ENCODE measurements at regions of chr12 and their contacts with region 1.

Region 1: GRCh38 chr12:32365473-32366064 is 33.8 kb upstream of the FGD4 start:
- DNase-seq: peak; percentile 64
- ATAC-seq: peak; percentile 70
- H3K4me3 ChIP-seq: no peak overlapping the region
- H3K27ac ChIP-seq: no peak overlapping the region
- H3K4me1 ChIP-seq: peaks cover 15% of the 10 kb centered on the region
- H3K27me3 ChIP-seq: no peaks in the 10 kb centered on the region
- CTCF ChIP-seq: peak; percentile 86
- EP300 ChIP-seq: no peak
- POLR2A ChIP-seq: no peak
- RAD21 ChIP-seq: peak; percentile 83

Region 2: DNA sequence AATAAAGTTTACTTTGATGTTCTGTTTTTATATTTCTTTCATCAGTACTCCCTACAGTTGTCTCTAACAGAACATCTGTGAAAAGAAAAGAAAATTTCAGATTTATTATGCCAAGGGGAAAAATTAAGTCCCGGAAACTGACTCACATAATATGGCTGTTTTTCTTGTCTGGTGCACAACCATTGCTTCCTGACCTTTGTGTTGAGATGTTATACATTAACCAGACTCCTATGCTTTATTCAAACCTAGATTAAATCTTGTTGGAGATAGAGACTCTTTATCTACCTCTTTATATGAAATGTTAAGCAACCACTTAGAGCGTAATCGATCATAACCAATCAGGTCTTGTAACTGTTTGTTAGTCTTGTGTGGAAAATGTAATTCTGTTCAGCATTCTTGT is 296.5 kb before region 1 on chr12:
- CTCF ChIA-PET with region 1: no interaction called
- POLR2A ChIA-PET with region 1: no interaction called
- in situ Hi-C with region 1: no loop called
- intact Hi-C with region 1: no loop called
- DNase-seq: peak; percentile 46
- ATAC-seq: peak; percentile 77
- H3K4me3 ChIP-seq: peak overlapping the region in 2 of 3 experiments; percentile 1 to 9; a peak in 1 of 6 replicates
- H3K27ac ChIP-seq: no peak overlapping the region
- H3K4me1 ChIP-seq: peaks cover 22% of the 10 kb centered on the region
- H3K27me3 ChIP-seq: no peaks in the 10 kb centered on the region
- CTCF ChIP-seq: no peak
- EP300 ChIP-seq: no peak
- POLR2A ChIP-seq: no peak
- RAD21 ChIP-seq: no peak

Region 3: DNA sequence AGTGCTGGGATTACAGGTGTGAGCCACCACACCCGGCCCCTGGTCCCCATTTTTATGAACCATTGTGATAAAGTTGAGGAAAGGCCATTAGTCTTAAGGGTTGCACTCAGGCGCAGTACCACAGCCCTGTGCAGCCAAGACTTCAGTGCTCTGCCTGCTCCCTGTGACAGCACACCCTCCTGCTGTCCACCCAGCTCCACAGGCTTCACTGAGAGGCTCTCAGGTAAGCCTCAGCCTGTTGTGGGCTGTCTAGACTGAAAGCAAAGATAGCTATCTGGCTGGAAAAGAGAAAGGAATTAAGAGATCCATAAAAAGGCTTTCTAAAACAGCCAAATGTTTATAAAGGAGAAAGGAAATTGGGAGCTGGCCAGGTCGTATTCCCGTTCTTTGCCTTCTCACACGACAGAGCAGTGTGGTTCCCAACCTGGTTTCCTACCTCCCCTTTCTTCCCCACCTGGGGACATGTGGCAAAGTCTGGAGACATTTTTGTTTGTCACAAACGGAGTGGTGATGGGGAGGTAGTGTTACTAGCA is 294.4 kb after region 1 on chr12:
- CTCF ChIA-PET with region 1: interaction called, 10 read pairs
- POLR2A ChIA-PET with region 1: no interaction called
- in situ Hi-C with region 1: no loop called
- intact Hi-C with region 1: loop called (anchors 1 kb)
- DNase-seq: no peak
- ATAC-seq: peak; percentile 36; the same call in 2 of the 3 replicates
- H3K4me3 ChIP-seq: no peak overlapping the region
- H3K27ac ChIP-seq: no peak overlapping the region
- H3K4me1 ChIP-seq: no peaks in the 10 kb centered on the region
- H3K27me3 ChIP-seq: no peaks in the 10 kb centered on the region
- CTCF ChIP-seq: no peak
- EP300 ChIP-seq: no peak
- POLR2A ChIP-seq: no peak
- RAD21 ChIP-seq: no peak

Region 4: GRCh38 chr12:32671930-32672780 is 306.6 kb after region 1 on chr12:
- CTCF ChIA-PET with region 1: interaction called, 14 read pairs
- POLR2A ChIA-PET with region 1: no interaction called
- in situ Hi-C with region 1: loop called (anchors 10 kb)
- intact Hi-C with region 1: loop called (anchors 1 kb)
- DNase-seq: peak; percentile 51
- ATAC-seq: peak; percentile 76
- H3K4me3 ChIP-seq: no peak overlapping the region
- H3K27ac ChIP-seq: no peak overlapping the region
- H3K4me1 ChIP-seq: peaks cover 33% of the 10 kb centered on the region
- H3K27me3 ChIP-seq: no peaks in the 10 kb centered on the region
- CTCF ChIP-seq: peak; percentile 83
- EP300 ChIP-seq: no peak
- POLR2A ChIP-seq: no peak
- RAD21 ChIP-seq: peak; percentile 74

Region 5: DNA sequence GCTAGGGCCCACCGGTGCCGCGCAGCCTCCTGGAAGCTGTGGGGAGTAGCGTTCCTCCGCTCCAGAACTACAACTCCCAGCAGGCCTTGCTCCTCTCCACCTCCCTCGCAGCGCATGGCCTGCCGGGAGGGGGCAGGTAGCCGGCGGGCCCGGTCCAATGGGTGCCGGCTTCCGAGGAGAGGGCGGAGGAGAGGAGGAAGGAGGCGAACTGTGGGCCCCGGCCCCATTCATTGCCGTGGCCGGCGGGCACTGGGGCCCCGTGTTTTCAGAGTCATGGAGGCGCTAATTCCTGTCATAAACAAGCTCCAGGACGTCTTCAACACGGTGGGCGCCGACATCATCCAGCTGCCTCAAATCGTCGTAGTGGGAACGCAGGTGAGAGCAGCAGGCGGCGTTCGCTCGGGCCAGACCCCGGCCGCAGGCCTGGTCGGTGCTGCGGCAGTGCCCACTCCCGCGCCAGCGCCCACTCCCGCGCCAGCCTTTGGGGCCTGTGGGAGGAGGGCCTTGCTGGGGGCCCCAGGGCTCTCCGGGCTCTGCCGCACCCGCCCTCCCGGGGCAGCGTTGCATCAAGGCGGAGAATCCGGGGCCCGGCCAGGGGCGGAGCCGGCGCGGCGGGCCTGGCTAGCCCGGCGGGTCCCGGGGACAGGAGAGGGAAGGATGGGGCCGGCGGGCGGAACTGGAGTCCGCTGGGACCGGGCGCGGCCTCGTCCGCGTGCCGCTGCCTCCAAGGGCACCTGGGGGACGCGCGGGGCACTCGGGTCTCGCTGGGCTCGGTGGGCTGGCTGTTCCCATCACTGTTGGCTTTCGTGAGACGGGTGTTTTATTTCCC is 313.7 kb after region 1 on chr12 and contains the start of gene DNM1L:
- CTCF ChIA-PET with region 1: no interaction called
- POLR2A ChIA-PET with region 1: no interaction called
- in situ Hi-C with region 1: loop called (anchors 10 kb)
- intact Hi-C with region 1: no loop called
- DNase-seq: peak; percentile 93
- ATAC-seq: peak; percentile 96
- H3K4me3 ChIP-seq: peak within 1 kb of the TSS; percentile 84 to 85 (median 84)
- H3K27ac ChIP-seq: peak within 1 kb of the TSS; percentile 92
- H3K4me1 ChIP-seq: peaks cover 64% of the 10 kb centered on the region
- H3K27me3 ChIP-seq: no peaks in the 10 kb centered on the region; a peak in 1 of 5 replicates
- CTCF ChIP-seq: 0 out of 2 replicates have a peak, but pooled peaks have one; percentile 2
- EP300 ChIP-seq: peak in 1 of 2 experiments; percentile 13; a peak in 1 of 4 replicates
- POLR2A ChIP-seq: peak; percentile 89 to 97
- RAD21 ChIP-seq: peak; percentile 33; the same call in 1 of the 2 replicates
- total RNA-seq, gene DNM1L: 65.8 and 81.5 TPM in 2 replicates

Measured in HepG2 (cell line).